ENCODE measurements at regions of chr7 and their contacts with region 1.

Region 1: GRCh38 chr7:139431010-139431409 is 52.5 kb downstream of the KLRG2 start:
- DNase-seq: no peak
- ATAC-seq: no peak
- H3K4me3 Mint-ChIP-seq: no peak overlapping the region
- H3K27ac Mint-ChIP-seq: no peak overlapping the region
- H3K4me1 Mint-ChIP-seq: peaks cover 13% of the 10 kb centered on the region
- H3K27me3 Mint-ChIP-seq: no peaks in the 10 kb centered on the region
- CTCF ChIP-seq: no peak

Region 2: GRCh38 chr7:138948108-138948802 is 482.8 kb before region 1 on chr7:
- CTCF ChIA-PET with region 1: no interaction called
- POLR2A ChIA-PET with region 1: no interaction called
- DNase-seq: no peak
- ATAC-seq: no peak
- H3K4me3 Mint-ChIP-seq: no peak overlapping the region
- H3K27ac Mint-ChIP-seq: peak overlapping the region; percentile 77
- H3K4me1 Mint-ChIP-seq: peaks cover 37% of the 10 kb centered on the region
- H3K27me3 Mint-ChIP-seq: no peaks in the 10 kb centered on the region
- CTCF ChIP-seq: no peak

Region 3: DNA sequence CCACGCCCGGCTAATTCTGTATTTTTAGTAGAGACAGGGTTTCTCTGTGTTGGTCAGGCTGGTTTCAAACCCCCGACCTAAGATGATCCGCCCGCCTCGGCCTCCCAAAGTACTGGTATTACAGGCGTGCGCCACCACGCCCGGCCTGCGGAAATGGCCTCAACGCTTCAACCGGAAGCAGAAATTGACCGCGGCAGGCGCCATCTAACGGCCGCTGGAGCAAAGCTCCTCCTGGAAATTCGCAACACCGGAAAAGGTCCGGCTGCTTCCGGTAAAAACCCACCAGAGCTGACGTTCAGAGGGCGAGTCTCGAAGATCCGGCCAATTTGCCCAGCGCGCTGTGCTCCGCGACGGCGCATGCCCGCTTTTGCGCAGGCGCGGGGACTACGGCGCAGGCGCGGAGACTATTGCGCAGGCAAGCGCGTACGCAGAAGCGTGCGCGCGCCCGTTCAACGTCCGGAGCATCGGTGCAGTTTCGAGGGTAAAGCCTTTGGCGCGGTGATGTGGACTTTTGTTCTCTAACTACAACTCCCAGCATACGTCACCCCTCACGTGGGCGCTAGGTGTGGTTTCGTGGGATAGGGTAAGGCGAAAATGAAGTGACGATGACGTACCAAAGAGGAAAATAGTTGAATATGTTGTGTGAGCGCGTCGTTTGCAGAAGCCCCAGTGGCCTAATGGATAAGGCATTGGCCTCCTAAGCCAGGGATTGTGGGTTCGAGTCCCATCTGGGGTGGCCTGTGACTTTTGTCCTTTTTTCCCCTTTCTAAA is 90.8 kb before region 1 on chr7:
- CTCF ChIA-PET with region 1: interaction called, 11 read pairs
- POLR2A ChIA-PET with region 1: no interaction called
- DNase-seq: peak; percentile 94
- ATAC-seq: peak; percentile 70
- H3K4me3 Mint-ChIP-seq: peak overlapping the region; percentile 92
- H3K27ac Mint-ChIP-seq: peak overlapping the region; percentile 99
- H3K4me1 Mint-ChIP-seq: peaks cover 7% of the 10 kb centered on the region
- H3K27me3 Mint-ChIP-seq: peaks cover 9% of the 10 kb centered on the region
- CTCF ChIP-seq: peak; percentile 34; the same call in 1 of the 2 replicates

Region 4: GRCh38 chr7:139446036-139446881 is 15.2 kb after region 1 on chr7:
- CTCF ChIA-PET with region 1: interaction called, 34 read pairs
- POLR2A ChIA-PET with region 1: no interaction called
- DNase-seq: no peak
- ATAC-seq: no peak
- H3K4me3 Mint-ChIP-seq: no peak overlapping the region
- H3K27ac Mint-ChIP-seq: no peak overlapping the region
- H3K4me1 Mint-ChIP-seq: no peaks in the 10 kb centered on the region
- H3K27me3 Mint-ChIP-seq: no peaks in the 10 kb centered on the region; the same call in 1 of the 2 replicates
- CTCF ChIP-seq: no peak

Region 5: GRCh38 chr7:139471740-139472353 is 40.8 kb after region 1 on chr7:
- CTCF ChIA-PET with region 1: interaction called, 13 read pairs
- POLR2A ChIA-PET with region 1: no interaction called
- DNase-seq: no peak
- ATAC-seq: no peak
- H3K4me3 Mint-ChIP-seq: no peak overlapping the region
- H3K27ac Mint-ChIP-seq: no peak overlapping the region
- H3K4me1 Mint-ChIP-seq: no peaks in the 10 kb centered on the region; the same call in 1 of the 2 replicates
- H3K27me3 Mint-ChIP-seq: no peaks in the 10 kb centered on the region
- CTCF ChIP-seq: no peak

Region 6: DNA sequence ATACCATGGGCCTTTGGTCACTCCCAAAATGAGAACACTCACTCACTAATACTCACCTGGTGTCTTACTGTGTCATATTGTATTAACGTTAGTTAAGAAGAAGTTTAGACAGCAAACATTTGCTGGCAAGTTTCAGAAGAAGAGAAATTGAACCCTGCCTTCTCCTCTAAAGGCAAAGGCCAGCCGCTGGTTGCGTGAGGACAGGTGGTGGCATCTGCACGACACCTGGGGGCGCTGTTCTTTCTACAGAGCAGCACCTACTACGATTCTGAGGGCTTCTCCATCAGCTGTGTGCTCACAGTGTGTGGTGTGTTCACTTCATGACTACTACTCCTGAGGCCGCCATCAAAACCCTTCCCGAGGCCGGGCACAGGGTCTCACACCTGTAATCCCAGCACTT is 74.6 kb after region 1 on chr7:
- CTCF ChIA-PET with region 1: interaction called, 27 read pairs
- POLR2A ChIA-PET with region 1: no interaction called
- DNase-seq: peak; percentile 82
- ATAC-seq: peak; percentile 93
- H3K4me3 Mint-ChIP-seq: no peak overlapping the region
- H3K27ac Mint-ChIP-seq: no peak overlapping the region
- H3K4me1 Mint-ChIP-seq: peaks cover 13% of the 10 kb centered on the region
- H3K27me3 Mint-ChIP-seq: peaks cover 2% of the 10 kb centered on the region; the same call in 1 of the 2 replicates
- CTCF ChIP-seq: peak; percentile 91

Region 7: DNA sequence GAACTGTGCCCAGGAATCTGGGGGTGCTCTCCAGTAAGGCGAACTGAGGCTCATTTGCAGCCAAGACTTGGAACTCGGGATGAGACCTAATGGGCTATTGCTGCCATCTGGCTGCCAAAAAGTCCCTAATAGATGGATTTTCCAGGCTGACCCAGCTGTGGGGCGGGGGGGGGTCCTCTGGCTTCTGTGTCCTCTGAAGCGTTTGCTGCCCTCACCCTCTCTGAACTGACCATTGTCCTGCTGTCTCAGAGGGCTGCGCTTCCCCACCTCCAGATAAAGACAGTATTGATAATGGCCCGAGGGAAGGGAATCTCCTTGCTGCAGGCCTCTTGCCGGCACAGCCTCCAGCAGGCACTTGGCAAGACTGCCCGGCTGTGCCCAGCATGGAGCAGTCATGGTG is 139.1 kb after region 1 on chr7:
- CTCF ChIA-PET with region 1: interaction called, 14 read pairs
- POLR2A ChIA-PET with region 1: no interaction called
- DNase-seq: no peak
- ATAC-seq: no peak
- H3K4me3 Mint-ChIP-seq: no peak overlapping the region
- H3K27ac Mint-ChIP-seq: no peak overlapping the region
- H3K4me1 Mint-ChIP-seq: peaks cover 24% of the 10 kb centered on the region
- H3K27me3 Mint-ChIP-seq: no peaks in the 10 kb centered on the region
- CTCF ChIP-seq: no peak